B cell (primary cell): ENCODE measurements at regions of chr16 and their contacts with region 1.

Region 1: DNA sequence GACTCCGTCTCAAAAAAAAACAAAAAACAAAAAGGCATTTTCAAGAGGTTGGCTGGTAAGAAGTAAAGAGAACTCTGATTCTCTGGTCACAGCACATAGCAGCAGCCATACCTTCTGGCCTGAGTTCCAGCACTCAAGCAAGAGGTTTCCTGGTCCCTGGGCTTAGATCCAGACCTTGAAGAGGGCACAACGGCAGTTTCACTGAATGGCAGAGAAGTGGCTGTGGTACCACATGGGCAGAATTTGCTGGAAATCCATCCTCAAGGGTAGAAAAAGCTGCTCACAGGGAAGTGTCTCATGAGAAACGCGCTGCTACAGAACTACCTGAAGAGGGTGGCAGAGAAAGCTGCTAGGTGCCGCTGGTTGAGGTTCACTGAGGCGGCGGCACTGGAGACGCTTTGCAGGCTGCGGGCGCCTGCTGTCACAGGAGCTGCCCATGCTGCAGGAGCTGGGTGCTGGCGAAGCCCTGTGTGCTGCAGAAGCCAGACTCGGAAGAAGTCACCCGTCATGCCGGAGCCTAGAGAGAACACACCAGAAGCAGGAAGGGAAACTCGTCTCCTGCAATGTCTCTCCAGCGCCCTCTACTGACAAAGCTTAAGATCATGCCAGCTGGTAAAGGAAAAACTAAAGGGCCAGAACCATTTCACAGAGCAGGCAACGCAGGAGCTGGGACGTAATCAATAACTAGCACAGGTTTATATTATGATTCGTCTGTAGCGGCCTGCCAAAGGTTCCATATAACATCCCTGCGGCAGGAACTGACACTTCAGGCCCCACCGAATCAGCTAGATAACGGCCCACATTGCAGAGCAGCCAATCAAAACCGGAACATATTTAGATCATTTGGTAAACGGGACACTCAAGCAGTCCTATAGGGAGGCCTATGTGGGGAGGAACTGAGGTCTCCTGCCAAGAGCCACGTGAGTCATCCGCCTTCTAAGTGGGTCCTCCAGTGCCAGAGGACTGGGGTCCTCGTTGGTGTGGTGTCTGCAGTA is 5.4 kb upstream of the ZNF213 start:
- DNase-seq: peak; percentile 92
- ATAC-seq: peak; percentile 73
- H3K4me3 ChIP-seq: peak overlapping the region; percentile 45 to 85 (median 67)
- H3K4me3 Mint-ChIP-seq: peak overlapping the region; percentile 92
- H3K27ac ChIP-seq: peak overlapping the region; percentile 5 to 56
- H3K27ac Mint-ChIP-seq: peak overlapping the region; percentile 87
- H3K4me1 ChIP-seq: peaks cover 24 to 37% of the 10 kb centered on the region in 2 donors
- H3K4me1 Mint-ChIP-seq: peaks cover 44% of the 10 kb centered on the region
- H3K27me3 ChIP-seq: no peaks in the 10 kb centered on the region
- H3K27me3 Mint-ChIP-seq: no peaks in the 10 kb centered on the region
- CTCF ChIP-seq: peak; percentile 80

Region 2: GRCh38 chr16:2752035-2752849 is 377.2 kb before region 1 on chr16 and contains the start of gene SRRM2:
- CTCF ChIA-PET with region 1: no interaction called
- POLR2A ChIA-PET with region 1: no interaction called
- intact Hi-C with region 1: no loop called
- DNase-seq: peak; percentile 100
- ATAC-seq: peak; percentile 83
- H3K4me3 ChIP-seq: peak within 1 kb of the TSS; percentile 68 to 97 (median 82)
- H3K4me3 Mint-ChIP-seq: peak within 1 kb of the TSS; percentile 95
- H3K27ac ChIP-seq: peak within 1 kb of the TSS; percentile 95 to 98
- H3K27ac Mint-ChIP-seq: peak within 1 kb of the TSS; percentile 99
- H3K4me1 ChIP-seq: peaks cover 36 to 45% of the 10 kb centered on the region in 2 donors
- H3K4me1 Mint-ChIP-seq: peaks cover 50% of the 10 kb centered on the region
- H3K27me3 ChIP-seq: no peaks in the 10 kb centered on the region
- H3K27me3 Mint-ChIP-seq: no peaks in the 10 kb centered on the region
- CTCF ChIP-seq: no peak
- total RNA-seq, gene SRRM2: 1,470 and 1,485 TPM in 2 replicates

Region 3: DNA sequence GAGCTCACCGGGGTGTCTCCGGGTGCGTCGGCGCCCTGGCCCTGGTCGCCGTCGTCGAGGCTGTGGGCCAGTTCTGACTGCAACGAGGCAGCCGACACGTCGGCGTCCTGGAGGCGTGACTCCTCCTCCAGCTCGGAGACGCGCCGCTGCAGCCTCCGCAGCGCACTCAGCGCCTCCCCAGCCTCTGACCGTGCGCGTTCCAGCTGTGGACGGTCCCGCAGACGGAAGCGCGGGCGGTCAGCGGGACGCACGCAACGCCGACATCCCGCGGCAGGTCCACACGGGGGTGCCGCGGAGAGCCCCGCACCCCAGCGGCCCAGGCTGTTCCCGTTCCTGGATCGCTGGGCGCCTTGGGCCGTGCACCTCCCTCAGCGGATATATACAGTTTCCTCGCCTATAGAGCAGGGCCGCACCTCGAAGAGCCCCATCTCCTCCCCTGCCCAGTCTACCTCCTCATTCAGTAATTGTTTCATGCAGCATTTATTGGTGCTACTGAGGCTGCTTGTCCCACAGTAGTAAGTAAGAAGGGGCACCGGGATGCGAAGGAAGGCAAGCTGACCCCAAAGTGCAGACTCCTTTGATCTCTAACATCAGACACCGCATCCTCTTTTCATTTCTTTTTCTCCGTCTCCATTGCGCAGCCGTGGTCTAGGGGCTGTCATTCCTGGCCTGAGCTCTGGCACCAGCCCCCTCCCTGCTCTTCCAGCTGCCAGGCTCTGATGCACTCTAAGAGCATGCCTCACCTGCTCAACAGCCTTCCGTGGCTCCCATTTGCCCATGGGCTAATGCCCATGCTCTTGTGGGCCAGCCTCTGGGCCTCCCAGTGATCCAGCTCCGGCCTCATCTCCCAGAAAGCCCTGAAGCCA is 99.7 kb before region 1 on chr16:
- CTCF ChIA-PET with region 1: interaction called, 133 read pairs
- POLR2A ChIA-PET with region 1: interaction called, 3 read pairs
- intact Hi-C with region 1: loop called (anchors 1 kb)
- DNase-seq: peak; percentile 54
- ATAC-seq: no peak
- H3K4me3 ChIP-seq: no peak overlapping the region
- H3K4me3 Mint-ChIP-seq: peak overlapping the region; percentile 35
- H3K27ac ChIP-seq: no peak overlapping the region
- H3K27ac Mint-ChIP-seq: no peak overlapping the region
- H3K4me1 ChIP-seq: peaks cover 25 to 28% of the 10 kb centered on the region in 2 donors
- H3K4me1 Mint-ChIP-seq: peaks cover 20% of the 10 kb centered on the region
- H3K27me3 ChIP-seq: peaks cover 0 to 58% (median 28%) of the 10 kb centered on the region in 4 experiments
- H3K27me3 Mint-ChIP-seq: peaks cover 40% of the 10 kb centered on the region
- CTCF ChIP-seq: no peak

Region 4: DNA sequence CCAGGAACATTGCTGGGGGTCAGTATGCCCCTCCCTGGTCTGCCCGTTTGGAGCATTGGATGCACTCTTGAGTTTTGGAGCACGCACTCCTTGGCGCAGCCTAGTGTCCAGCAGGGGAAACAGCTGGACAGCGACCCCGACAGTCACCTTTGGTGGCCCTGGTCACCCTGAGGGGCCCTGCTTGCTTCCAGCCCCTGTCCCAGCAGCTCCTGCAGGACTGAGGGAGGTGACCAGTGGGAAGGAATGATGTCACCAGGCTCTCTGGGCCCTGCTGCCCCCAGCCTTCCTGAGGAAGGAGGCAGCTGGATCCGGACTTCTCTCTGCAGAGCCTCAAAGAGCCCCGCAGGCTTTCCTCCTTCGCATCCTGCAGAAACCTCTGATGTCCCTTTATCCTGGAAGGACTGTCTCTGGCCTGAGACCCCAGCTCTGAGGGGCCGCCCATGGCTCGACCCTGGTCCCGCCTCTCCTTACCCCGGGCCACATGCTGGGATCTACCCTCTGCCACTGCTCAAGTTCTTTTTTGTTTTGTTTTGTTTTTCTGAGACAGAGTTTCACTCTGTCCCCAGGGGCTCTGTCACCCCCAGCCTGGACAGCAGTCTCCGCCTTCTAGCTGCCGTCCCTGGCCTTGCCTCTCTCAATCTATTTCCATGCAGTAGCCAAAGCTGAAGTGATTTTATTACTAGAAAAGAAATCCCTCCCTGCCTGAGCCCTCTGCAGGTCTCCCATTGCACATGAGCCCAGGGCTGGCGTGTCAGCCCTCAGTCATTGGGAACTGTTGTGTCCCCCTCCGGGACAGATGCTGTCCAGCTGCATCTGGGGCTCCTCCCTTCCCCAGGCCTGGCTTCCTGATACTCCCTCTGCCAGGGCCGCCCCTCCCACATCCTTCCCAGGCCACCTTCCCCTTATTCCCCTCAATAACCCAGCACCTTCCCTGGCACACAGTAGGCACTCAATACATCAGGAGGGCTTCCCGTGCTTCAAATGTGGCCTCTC is 41.9 kb before region 1 on chr16:
- CTCF ChIA-PET with region 1: interaction called, 238 read pairs
- POLR2A ChIA-PET with region 1: interaction called, 3 read pairs
- intact Hi-C with region 1: no loop called
- DNase-seq: no peak
- ATAC-seq: no peak
- H3K4me3 ChIP-seq: no peak overlapping the region
- H3K4me3 Mint-ChIP-seq: no peak overlapping the region
- H3K27ac ChIP-seq: no peak overlapping the region
- H3K27ac Mint-ChIP-seq: no peak overlapping the region
- H3K4me1 ChIP-seq: no peaks in the 10 kb centered on the region
- H3K4me1 Mint-ChIP-seq: peaks cover 4% of the 10 kb centered on the region
- H3K27me3 ChIP-seq: peaks cover 0 to 8% (median 3%) of the 10 kb centered on the region in 4 experiments
- H3K27me3 Mint-ChIP-seq: peaks cover 7% of the 10 kb centered on the region
- CTCF ChIP-seq: no peak

Region 5: GRCh38 chr16:3099732-3100499 is 29.5 kb before region 1 on chr16:
- CTCF ChIA-PET with region 1: interaction called, 238 read pairs
- POLR2A ChIA-PET with region 1: interaction called, 11 read pairs
- intact Hi-C with region 1: loop called (anchors 1 kb)
- DNase-seq: peak; percentile 88
- ATAC-seq: peak; percentile 88
- H3K4me3 ChIP-seq: peak overlapping the region in 4 of 5 experiments; percentile 26 to 48 (median 36)
- H3K4me3 Mint-ChIP-seq: peak overlapping the region; percentile 83
- H3K27ac ChIP-seq: no peak overlapping the region
- H3K27ac Mint-ChIP-seq: peak overlapping the region; percentile 56
- H3K4me1 ChIP-seq: peaks cover 25 to 40% of the 10 kb centered on the region in 2 donors
- H3K4me1 Mint-ChIP-seq: peaks cover 32% of the 10 kb centered on the region
- H3K27me3 ChIP-seq: no peaks in the 10 kb centered on the region
- H3K27me3 Mint-ChIP-seq: no peaks in the 10 kb centered on the region
- CTCF ChIP-seq: no peak

Region 6: DNA sequence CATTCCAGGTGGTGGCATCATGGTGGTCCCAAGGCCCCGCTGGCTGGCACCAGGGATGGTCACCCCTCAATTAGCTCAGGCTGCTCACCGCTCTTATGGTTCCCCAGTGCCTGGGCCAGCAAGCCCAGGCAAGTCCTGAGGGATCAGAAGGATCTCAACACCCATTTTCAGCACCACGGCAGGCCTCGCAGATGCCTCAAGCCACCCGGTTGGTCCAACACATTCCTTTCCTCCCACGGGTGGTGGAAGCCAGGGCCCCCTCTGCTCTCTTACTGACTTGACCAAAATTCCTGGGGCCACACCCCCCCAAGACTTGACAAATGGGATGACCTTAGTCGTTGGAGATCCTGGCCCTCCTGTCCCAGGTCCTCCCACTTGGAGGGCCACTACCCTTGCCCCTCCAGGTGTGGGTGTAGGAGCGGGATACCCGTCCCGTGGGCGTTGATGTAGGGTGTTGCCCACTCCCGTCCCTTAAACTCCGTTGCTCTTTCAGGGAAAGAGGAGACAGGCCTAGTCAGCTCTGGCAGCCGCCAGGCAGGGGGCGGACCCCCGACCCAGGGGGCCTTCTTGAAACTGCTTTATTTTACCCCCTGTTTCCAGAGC is 11.1 kb before region 1 on chr16:
- CTCF ChIA-PET with region 1: interaction called, 13 read pairs
- POLR2A ChIA-PET with region 1: interaction called, 5 read pairs
- intact Hi-C with region 1: no loop called
- DNase-seq: no peak
- ATAC-seq: no peak
- H3K4me3 ChIP-seq: no peak overlapping the region
- H3K4me3 Mint-ChIP-seq: no peak overlapping the region
- H3K27ac ChIP-seq: no peak overlapping the region
- H3K27ac Mint-ChIP-seq: no peak overlapping the region
- H3K4me1 ChIP-seq: peaks cover 0 to under 1% of the 10 kb centered on the region in 2 donors
- H3K4me1 Mint-ChIP-seq: no peaks in the 10 kb centered on the region
- H3K27me3 ChIP-seq: peaks cover 0 to 10% (median 3%) of the 10 kb centered on the region in 4 experiments
- H3K27me3 Mint-ChIP-seq: peaks cover 6% of the 10 kb centered on the region
- CTCF ChIP-seq: no peak

Region 7: GRCh38 chr16:3158471-3159314 is 29.3 kb after region 1 on chr16:
- CTCF ChIA-PET with region 1: interaction called, 13 read pairs
- POLR2A ChIA-PET with region 1: interaction called, 13 read pairs
- intact Hi-C with region 1: loop called (anchors 2 kb)
- DNase-seq: peak; percentile 92
- ATAC-seq: peak; percentile 91
- H3K4me3 ChIP-seq: peak overlapping the region; percentile 67 to 96 (median 84)
- H3K4me3 Mint-ChIP-seq: peak overlapping the region; percentile 93
- H3K27ac ChIP-seq: peak overlapping the region; percentile 43 to 60
- H3K27ac Mint-ChIP-seq: peak overlapping the region; percentile 95
- H3K4me1 ChIP-seq: peaks cover 17 to 27% of the 10 kb centered on the region in 2 donors
- H3K4me1 Mint-ChIP-seq: peaks cover 18% of the 10 kb centered on the region
- H3K27me3 ChIP-seq: peaks cover 0 to 6% (median 2%) of the 10 kb centered on the region in 4 experiments
- H3K27me3 Mint-ChIP-seq: peaks cover 2% of the 10 kb centered on the region
- CTCF ChIP-seq: no peak

Region 8: DNA sequence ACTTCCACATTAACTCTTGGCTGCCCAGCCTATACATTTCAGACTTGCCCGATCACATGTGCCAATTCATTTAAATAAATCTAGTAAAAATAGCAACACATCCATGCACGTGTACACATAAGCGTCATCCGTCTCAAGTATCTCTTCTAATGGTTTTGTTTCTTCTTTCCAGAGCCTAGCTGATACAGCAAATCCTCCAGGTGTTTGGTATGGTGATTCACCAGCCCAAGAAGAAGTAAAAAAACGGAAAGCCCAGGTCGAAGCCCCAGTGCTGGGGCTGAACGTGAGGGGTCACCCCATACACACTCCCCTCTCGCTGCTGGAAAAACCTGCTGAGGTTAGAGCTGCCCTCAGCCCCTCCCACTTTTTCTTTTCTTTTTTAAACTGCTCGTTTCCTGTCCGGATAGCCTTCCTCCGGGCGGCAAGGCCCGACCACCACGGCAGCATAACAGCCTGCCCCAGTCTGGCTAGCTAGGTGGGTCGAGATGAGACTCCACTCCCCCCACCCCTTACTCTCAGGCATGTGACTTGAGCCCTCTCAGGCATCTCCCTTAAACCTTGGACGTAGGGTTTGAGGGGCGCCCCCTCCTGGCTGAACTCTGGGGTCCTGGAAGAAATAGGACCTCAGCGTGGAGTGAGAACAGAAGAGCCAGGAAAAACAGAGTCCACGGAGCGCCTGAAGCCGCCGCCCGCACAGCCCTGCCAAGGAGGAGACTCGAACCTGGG is 44.6 kb after region 1 on chr16:
- CTCF ChIA-PET with region 1: interaction called, 13 read pairs
- POLR2A ChIA-PET with region 1: interaction called, 3 read pairs
- intact Hi-C with region 1: no loop called
- DNase-seq: peak; percentile 44
- ATAC-seq: no peak
- H3K4me3 ChIP-seq: peak overlapping the region in 1 of 5 experiments; percentile 33
- H3K4me3 Mint-ChIP-seq: peak overlapping the region; percentile 23
- H3K27ac ChIP-seq: no peak overlapping the region
- H3K27ac Mint-ChIP-seq: no peak overlapping the region
- H3K4me1 ChIP-seq: peaks cover 40 to 47% of the 10 kb centered on the region in 2 donors
- H3K4me1 Mint-ChIP-seq: peaks cover 29% of the 10 kb centered on the region
- H3K27me3 ChIP-seq: peaks cover 0 to 84% (median 55%) of the 10 kb centered on the region in 4 experiments
- H3K27me3 Mint-ChIP-seq: peaks cover 77% of the 10 kb centered on the region
- CTCF ChIP-seq: no peak

Region 9: DNA sequence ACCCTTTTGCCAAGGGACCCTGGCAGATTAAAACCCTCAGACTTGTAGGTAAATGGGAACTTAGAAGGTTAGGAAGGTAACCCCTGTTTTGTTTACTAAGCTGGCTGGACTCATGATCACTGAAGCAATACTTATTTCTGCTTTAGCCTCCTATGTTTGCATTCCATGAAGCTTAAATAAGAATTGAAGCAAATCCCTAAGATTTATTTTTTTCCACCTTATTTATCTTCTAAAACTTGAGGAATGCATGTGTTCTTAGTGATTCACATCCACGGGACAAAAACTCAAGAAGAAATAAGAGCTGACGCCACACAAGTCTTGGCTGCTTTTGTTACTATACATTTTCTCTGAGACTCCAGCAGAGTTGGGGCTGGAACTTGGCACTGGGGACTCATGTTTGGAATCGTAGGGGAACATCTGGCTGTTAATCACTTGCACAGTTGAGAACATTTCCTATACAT is 406.9 kb after region 1 on chr16:
- CTCF ChIA-PET with region 1: no interaction called
- POLR2A ChIA-PET with region 1: no interaction called
- intact Hi-C with region 1: no loop called
- DNase-seq: no peak
- ATAC-seq: no peak
- H3K4me3 ChIP-seq: no peak overlapping the region
- H3K4me3 Mint-ChIP-seq: no peak overlapping the region
- H3K27ac ChIP-seq: no peak overlapping the region
- H3K27ac Mint-ChIP-seq: no peak overlapping the region
- H3K4me1 ChIP-seq: peaks cover 0 to 13% of the 10 kb centered on the region in 2 donors
- H3K4me1 Mint-ChIP-seq: peaks cover 18% of the 10 kb centered on the region
- H3K27me3 ChIP-seq: no peaks in the 10 kb centered on the region
- H3K27me3 Mint-ChIP-seq: no peaks in the 10 kb centered on the region
- CTCF ChIP-seq: no peak